ENCODE measurements at regions of chr3 and their contacts with region 1.

Region 1: GRCh38 chr3:115871735-115872134 is 248.4 kb downstream of the GAP43 start:
- DNase-seq: no peak
- H3K4me3 ChIP-seq: no peak overlapping the region
- H3K27ac ChIP-seq: no peak overlapping the region
- H3K4me1 ChIP-seq: no peaks in the 10 kb centered on the region
- H3K27me3 ChIP-seq: no peaks in the 10 kb centered on the region
- CTCF ChIP-seq: no peak

Region 2: GRCh38 chr3:115806501-115806900 is 65.2 kb before region 1 on chr3:
- CTCF ChIA-PET with region 1: no interaction called
- POLR2A ChIA-PET with region 1: no interaction called
- intact Hi-C with region 1: no loop called
- DNase-seq: no peak
- H3K4me3 ChIP-seq: no peak overlapping the region
- H3K27ac ChIP-seq: no peak overlapping the region
- H3K4me1 ChIP-seq: peaks cover 31% of the 10 kb centered on the region
- H3K27me3 ChIP-seq: no peaks in the 10 kb centered on the region
- CTCF ChIP-seq: no peak

Region 3: DNA sequence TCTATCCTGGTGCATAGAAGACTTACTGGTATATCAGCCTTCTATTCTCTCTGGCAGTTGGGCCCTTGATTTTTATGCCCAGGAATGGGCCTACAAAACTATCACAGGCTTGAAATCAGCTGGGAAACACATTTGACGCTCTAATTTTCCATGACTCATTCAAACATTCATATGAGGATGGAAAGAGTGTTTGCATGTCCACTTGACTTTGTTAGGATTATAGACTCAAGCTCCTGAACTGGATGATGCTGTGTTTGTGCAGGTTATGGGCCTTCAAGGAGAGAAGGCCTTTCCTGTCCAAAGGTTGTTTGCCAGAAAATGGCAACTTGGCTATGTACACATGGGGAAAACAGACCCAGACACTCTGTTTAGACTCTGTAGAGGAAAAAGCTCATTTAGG is 28.5 kb before region 1 on chr3:
- CTCF ChIA-PET with region 1: interaction called, 11 read pairs
- POLR2A ChIA-PET with region 1: no interaction called
- intact Hi-C with region 1: no loop called
- DNase-seq: no peak
- H3K4me3 ChIP-seq: no peak overlapping the region
- H3K27ac ChIP-seq: no peak overlapping the region
- H3K4me1 ChIP-seq: no peaks in the 10 kb centered on the region
- H3K27me3 ChIP-seq: no peaks in the 10 kb centered on the region
- CTCF ChIP-seq: no peak

Measured in PC-9 (cell line).